ENCODE measurements at regions of chr7 and their contacts with region 1.

Region 1: DNA sequence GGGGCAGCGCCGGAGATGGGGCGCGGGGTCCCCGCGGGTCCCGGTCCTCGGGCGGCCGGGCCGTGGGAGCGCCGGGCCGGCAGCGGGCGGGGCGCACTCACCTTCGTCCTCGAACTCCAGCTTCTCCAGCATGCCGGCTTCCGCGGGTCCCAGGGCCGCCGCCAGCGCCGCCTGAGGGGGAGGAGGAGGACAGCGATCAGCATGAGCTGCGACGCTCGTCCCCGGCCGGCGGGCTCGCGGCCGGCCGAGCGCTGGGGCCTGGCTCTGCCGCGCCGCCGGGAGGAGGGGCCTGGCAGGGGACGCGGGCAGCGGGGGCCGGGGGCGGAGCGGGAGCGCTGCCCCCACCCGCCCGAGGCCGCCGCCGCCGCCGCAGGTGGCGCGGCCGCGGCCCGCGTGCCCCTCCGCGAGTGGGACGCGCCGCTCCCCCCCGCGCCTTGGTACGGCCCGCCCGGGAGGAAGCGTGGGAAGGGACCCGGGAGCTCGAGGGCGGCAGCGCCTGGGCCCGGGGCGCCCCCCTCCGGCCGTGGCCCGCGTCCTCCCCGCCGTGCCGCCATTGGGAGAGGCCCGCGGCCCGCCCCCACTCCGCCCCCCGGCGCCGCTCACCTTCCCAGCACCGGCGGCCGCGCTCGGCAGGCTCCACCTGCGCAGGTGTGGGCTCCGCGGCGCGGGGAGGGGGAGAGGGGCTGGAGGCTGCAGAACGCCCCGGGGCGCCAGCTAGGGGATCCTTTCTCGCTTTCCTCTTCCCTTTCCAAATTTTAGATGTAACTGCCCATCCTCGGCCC is 112.5 kb upstream of the RHEB start:
- DNase-seq: peak; percentile 77
- H3K4me3 Mint-ChIP-seq: peak overlapping the region; percentile 84
- H3K27ac Mint-ChIP-seq: peak overlapping the region; percentile 84
- H3K4me1 Mint-ChIP-seq: peaks cover 48% of the 10 kb centered on the region
- H3K27me3 Mint-ChIP-seq: no peaks in the 10 kb centered on the region
- CTCF ChIP-seq: peak; percentile 21

Region 2: GRCh38 chr7:151570366-151570915 is 61.7 kb before region 1 on chr7:
- CTCF ChIA-PET with region 1: interaction called, 4 read pairs
- POLR2A ChIA-PET with region 1: interaction called, 4 read pairs
- intact Hi-C with region 1: loop called (anchors 1 kb)
- DNase-seq: peak; percentile 24
- H3K4me3 Mint-ChIP-seq: no peak overlapping the region
- H3K27ac Mint-ChIP-seq: no peak overlapping the region
- H3K4me1 Mint-ChIP-seq: no peaks in the 10 kb centered on the region
- H3K27me3 Mint-ChIP-seq: no peaks in the 10 kb centered on the region
- CTCF ChIP-seq: peak; percentile 52

Region 3: GRCh38 chr7:151642746-151643145 is 10.6 kb after region 1 on chr7:
- CTCF ChIA-PET with region 1: interaction called, 26 read pairs
- POLR2A ChIA-PET with region 1: interaction called, 83 read pairs
- intact Hi-C with region 1: no loop called
- DNase-seq: peak; percentile 67
- H3K4me3 Mint-ChIP-seq: no peak overlapping the region
- H3K27ac Mint-ChIP-seq: peak overlapping the region; percentile 79
- H3K4me1 Mint-ChIP-seq: peaks cover 40% of the 10 kb centered on the region
- H3K27me3 Mint-ChIP-seq: no peaks in the 10 kb centered on the region
- CTCF ChIP-seq: no peak

Region 4: DNA sequence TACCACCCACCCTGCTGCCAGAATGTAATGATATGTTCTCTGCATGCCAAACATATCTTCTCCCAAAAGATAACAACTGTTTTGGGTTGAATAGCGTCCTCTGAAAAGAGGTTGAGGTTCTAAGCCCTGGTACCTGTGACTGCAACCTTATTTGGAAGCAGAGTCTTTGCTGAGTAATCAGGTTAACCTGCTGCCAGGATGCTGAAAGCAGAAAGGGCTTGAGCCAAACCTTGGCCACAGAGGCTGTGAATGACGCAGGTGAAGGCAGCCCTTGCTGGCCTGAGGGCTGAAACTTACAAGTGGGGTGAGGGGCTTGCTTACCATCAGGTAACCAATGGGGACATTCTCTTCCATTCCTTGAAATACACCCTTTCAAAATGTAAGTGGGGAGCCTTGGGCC is 39.4 kb after region 1 on chr7:
- CTCF ChIA-PET with region 1: interaction called, 7 read pairs
- POLR2A ChIA-PET with region 1: interaction called, 10 read pairs
- intact Hi-C with region 1: no loop called
- DNase-seq: peak; percentile 93
- H3K4me3 Mint-ChIP-seq: no peak overlapping the region
- H3K27ac Mint-ChIP-seq: peak overlapping the region; percentile 65
- H3K4me1 Mint-ChIP-seq: peaks cover 29% of the 10 kb centered on the region
- H3K27me3 Mint-ChIP-seq: no peaks in the 10 kb centered on the region
- CTCF ChIP-seq: no peak

Region 5: GRCh38 chr7:151687523-151688218 is 55.5 kb after region 1 on chr7:
- CTCF ChIA-PET with region 1: interaction called, 13 read pairs
- POLR2A ChIA-PET with region 1: interaction called, 80 read pairs
- intact Hi-C with region 1: loop called (anchors 2 kb)
- DNase-seq: peak; percentile 99
- H3K4me3 Mint-ChIP-seq: peak overlapping the region; percentile 28
- H3K27ac Mint-ChIP-seq: peak overlapping the region; percentile 99
- H3K4me1 Mint-ChIP-seq: peaks cover 38% of the 10 kb centered on the region
- H3K27me3 Mint-ChIP-seq: no peaks in the 10 kb centered on the region
- CTCF ChIP-seq: no peak

Region 6: DNA sequence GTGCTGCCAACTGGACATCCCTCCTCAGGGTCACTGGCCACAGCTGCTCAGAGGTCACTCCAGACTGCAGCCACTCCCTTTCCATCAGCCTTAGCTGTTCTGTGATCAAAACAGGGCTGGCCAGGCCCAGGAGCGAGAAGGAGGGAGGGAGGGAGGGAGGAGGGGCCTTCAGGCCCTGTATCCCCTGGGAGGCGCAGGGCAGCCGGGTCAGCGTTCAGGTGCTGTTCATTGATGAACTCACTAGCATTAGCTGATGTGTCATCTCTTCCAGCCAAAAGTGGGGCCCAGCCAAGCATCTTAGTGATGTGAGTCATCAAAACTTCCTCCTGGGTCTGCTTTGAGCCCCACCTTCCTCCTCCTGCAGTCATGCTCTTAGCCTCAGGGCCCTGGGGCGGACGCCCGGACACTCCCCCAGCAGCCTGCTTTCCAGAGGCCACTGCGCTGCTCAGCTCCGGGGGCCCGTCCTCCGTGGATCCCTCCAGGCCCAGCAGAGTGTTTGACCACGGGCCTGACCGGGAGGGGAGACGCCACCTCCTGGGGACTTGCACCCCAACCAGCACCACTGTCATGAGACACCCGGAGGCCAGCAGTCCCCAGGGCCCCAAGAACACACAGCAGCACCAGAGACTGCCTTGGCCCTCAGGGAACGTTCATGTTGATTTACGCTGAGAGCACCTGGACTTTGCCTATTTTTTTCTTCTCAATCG is 95.6 kb after region 1 on chr7:
- CTCF ChIA-PET with region 1: no interaction called
- POLR2A ChIA-PET with region 1: interaction called, 9 read pairs
- intact Hi-C with region 1: loop called (anchors 1 kb)
- DNase-seq: peak; percentile 99
- H3K4me3 Mint-ChIP-seq: no peak overlapping the region
- H3K27ac Mint-ChIP-seq: peak overlapping the region; percentile 43
- H3K4me1 Mint-ChIP-seq: peaks cover 24% of the 10 kb centered on the region
- H3K27me3 Mint-ChIP-seq: no peaks in the 10 kb centered on the region
- CTCF ChIP-seq: no peak

Region 7: DNA sequence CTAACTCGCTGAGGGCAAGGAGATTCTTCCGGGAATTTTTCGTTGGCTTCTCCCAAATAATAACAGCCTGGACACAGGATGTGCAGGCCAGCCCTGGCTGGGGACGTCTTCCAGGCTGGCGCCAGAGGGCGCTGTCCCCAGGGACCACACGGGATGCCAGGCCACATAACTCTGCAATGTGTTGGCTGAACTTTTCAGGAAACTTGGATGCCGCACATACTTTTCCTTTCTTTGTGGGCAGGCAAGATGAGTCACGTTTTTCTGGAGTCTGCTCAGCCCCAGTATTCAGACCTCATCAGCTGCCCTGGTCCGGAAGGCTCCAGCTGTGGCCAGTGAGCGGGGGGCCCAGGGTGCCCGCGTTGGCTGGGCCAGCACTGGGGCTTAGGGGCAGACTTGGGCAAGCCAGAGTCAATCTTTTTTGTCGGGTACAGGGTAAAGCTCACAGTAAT is 122.0 kb after region 1 on chr7:
- CTCF ChIA-PET with region 1: interaction called, 22 read pairs
- POLR2A ChIA-PET with region 1: interaction called, 25 read pairs
- intact Hi-C with region 1: loop called (anchors 2 kb)
- DNase-seq: peak; percentile 97
- H3K4me3 Mint-ChIP-seq: no peak overlapping the region
- H3K27ac Mint-ChIP-seq: no peak overlapping the region
- H3K4me1 Mint-ChIP-seq: peaks cover 20% of the 10 kb centered on the region
- H3K27me3 Mint-ChIP-seq: no peaks in the 10 kb centered on the region
- CTCF ChIP-seq: peak; percentile 93

Region 8: GRCh38 chr7:151795168-151795811 is 163.1 kb after region 1 on chr7:
- CTCF ChIA-PET with region 1: no interaction called
- POLR2A ChIA-PET with region 1: no interaction called
- intact Hi-C with region 1: no loop called
- DNase-seq: peak; percentile 29
- H3K4me3 Mint-ChIP-seq: no peak overlapping the region
- H3K27ac Mint-ChIP-seq: peak overlapping the region; percentile 51
- H3K4me1 Mint-ChIP-seq: peaks cover 25% of the 10 kb centered on the region
- H3K27me3 Mint-ChIP-seq: no peaks in the 10 kb centered on the region
- CTCF ChIP-seq: no peak

Measured in MCF 10A (cell line).